ENCODE measurements at regions of chr15 and their contacts with region 1.

Region 1: GRCh38 chr15:74799856-74800547 is 12.6 kb upstream of the LMAN1L start:
- DNase-seq: peak; percentile 98
- H3K27ac ChIP-seq: peak overlapping the region; percentile 93
- CTCF ChIP-seq: peak; percentile 98

Region 2: GRCh38 chr15:74781431-74782258 is 18.4 kb before region 1 on chr15 and contains the start of gene CSK:
- CTCF ChIA-PET with region 1: interaction called, 14 read pairs
- POLR2A ChIA-PET with region 1: interaction called, 4 read pairs
- DNase-seq: peak; percentile 89
- H3K27ac ChIP-seq: peak within 1 kb of the TSS; percentile 83
- CTCF ChIP-seq: peak; percentile 99